ENCODE measurements at regions of chr14 and their contacts with region 1.

Region 1: DNA sequence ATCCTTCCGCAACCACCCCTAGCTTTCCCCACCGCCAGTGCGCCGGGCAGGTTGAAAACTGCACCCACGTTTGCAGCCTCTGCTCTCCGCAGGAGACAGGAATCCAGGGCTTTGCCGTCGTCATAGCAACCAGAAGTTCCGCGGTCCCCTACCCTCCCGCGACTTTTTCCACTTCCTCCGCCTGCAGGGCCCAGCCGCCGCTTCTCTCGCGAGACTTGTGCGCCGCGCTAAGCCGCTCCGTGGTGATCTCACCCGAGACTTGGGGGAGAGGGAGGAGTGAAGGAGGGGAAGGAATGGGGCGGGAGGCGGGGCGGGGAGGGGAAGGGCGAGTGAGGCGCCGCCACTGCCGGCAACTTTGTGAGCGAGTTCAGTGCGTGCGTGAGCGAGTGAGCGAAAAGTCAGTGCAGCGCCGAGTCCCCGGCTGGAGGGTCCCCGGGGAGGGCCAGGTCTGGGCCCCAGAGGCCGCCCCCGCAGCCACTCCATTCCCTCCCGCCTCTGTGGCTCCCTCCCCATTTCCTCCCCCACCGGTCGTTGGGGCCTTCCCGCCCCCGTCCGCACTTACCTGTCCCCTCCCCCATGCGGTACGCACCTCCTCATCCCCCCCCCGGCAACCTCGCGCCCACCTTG is 413.0 kb downstream of the PCNX1 start:
- DNase-seq: peak; percentile 96 to 100 (median 98)
- ATAC-seq: peak; percentile 85
- H3K4me3 ChIP-seq: peak within 1 kb of the TSS; percentile 85
- H3K4me3 Mint-ChIP-seq: peak within 1 kb of the TSS; percentile 94
- H3K27ac ChIP-seq: peak within 1 kb of the TSS; percentile 85 to 97
- H3K27ac Mint-ChIP-seq: peak within 1 kb of the TSS; percentile 89
- H3K4me1 ChIP-seq: peaks cover 20% of the 10 kb centered on the region
- H3K4me1 Mint-ChIP-seq: peaks cover 47% of the 10 kb centered on the region
- H3K27me3 ChIP-seq: no peaks in the 10 kb centered on the region
- H3K27me3 Mint-ChIP-seq: no peaks in the 10 kb centered on the region
- CTCF ChIP-seq: no peak

Region 2: GRCh38 chr14:70359181-70360090 is 960.8 kb before region 1 on chr14 and contains the start of gene COX16:
- CTCF ChIA-PET with region 1: no interaction called
- POLR2A ChIA-PET with region 1: no interaction called
- intact Hi-C with region 1: loop called in 1 of 2 experiments (anchors 5 kb)
- DNase-seq: peak; percentile 63 to 92 (median 74)
- ATAC-seq: peak; percentile 95
- H3K4me3 ChIP-seq: peak within 1 kb of the TSS; percentile 74
- H3K4me3 Mint-ChIP-seq: peak within 1 kb of the TSS; percentile 97
- H3K27ac ChIP-seq: peak within 1 kb of the TSS; percentile 32 to 53
- H3K27ac Mint-ChIP-seq: peak within 1 kb of the TSS; percentile 91
- H3K4me1 ChIP-seq: peaks cover 21% of the 10 kb centered on the region
- H3K4me1 Mint-ChIP-seq: peaks cover 53% of the 10 kb centered on the region
- H3K27me3 ChIP-seq: no peaks in the 10 kb centered on the region
- H3K27me3 Mint-ChIP-seq: no peaks in the 10 kb centered on the region
- CTCF ChIP-seq: no peak
- total RNA-seq, gene COX16: 11.7 to 13.3 TPM

Region 3: DNA sequence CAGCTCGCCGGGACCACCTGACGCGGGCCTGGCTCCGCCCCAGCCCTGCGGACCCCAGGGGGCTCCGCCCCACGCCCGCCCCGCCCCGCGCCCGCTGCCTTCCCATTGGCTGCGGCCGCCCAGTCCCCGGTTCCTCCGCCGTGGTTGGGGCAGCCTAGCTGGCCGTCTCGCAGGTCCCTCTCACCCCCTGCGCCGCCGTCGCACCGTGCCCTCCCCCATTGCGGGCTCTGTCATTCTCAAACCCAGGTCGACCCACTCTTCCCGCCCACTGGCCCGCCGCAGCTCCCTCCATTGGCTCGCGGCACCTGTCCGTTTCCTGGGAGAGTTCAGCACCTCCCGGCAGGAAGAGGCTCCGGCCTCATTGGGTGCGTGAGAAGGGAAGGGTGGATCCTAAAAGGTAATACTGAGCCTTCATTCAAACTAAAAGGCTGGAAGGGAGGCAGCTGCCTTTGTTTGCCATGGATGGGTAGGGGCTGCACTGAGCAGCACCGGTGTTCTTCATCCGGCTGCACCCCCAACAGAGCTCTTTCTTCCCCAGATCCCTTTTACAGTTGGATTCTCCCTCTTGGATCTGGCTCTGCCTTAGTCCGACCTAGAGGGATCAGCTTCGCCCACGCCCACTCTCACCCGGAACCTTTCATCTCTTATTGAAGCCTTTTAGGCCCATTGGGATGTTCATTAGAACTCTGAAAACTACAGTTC is 510.5 kb before region 1 on chr14:
- CTCF ChIA-PET with region 1: no interaction called
- POLR2A ChIA-PET with region 1: interaction called, 3 read pairs
- intact Hi-C with region 1: loop called in 1 of 2 experiments (anchors 5 kb)
- DNase-seq: peak; percentile 69 to 94 (median 84)
- ATAC-seq: peak; percentile 74
- H3K4me3 ChIP-seq: peak overlapping the region; percentile 74
- H3K4me3 Mint-ChIP-seq: no peak overlapping the region
- H3K27ac ChIP-seq: peak overlapping the region in 1 of 2 donors; percentile 31
- H3K27ac Mint-ChIP-seq: no peak overlapping the region
- H3K4me1 ChIP-seq: peaks cover 15% of the 10 kb centered on the region
- H3K4me1 Mint-ChIP-seq: peaks cover 10% of the 10 kb centered on the region
- H3K27me3 ChIP-seq: no peaks in the 10 kb centered on the region
- H3K27me3 Mint-ChIP-seq: no peaks in the 10 kb centered on the region
- CTCF ChIP-seq: no peak

Region 4: GRCh38 chr14:71403656-71404055 is 83.4 kb after region 1 on chr14:
- CTCF ChIA-PET with region 1: interaction called, 5 read pairs
- POLR2A ChIA-PET with region 1: interaction called, 16 read pairs
- intact Hi-C with region 1: loop called (anchors 1 to 5 kb)
- DNase-seq: peak in 6 of 14 experiments; percentile 7 to 62 (median 29)
- ATAC-seq: peak; percentile 48
- H3K4me3 ChIP-seq: no peak overlapping the region
- H3K4me3 Mint-ChIP-seq: no peak overlapping the region
- H3K27ac ChIP-seq: no peak overlapping the region
- H3K27ac Mint-ChIP-seq: peak overlapping the region; percentile 73
- H3K4me1 ChIP-seq: peaks cover 9% of the 10 kb centered on the region
- H3K4me1 Mint-ChIP-seq: peaks cover 27% of the 10 kb centered on the region
- H3K27me3 ChIP-seq: no peaks in the 10 kb centered on the region
- H3K27me3 Mint-ChIP-seq: no peaks in the 10 kb centered on the region
- CTCF ChIP-seq: no peak

Region 5: GRCh38 chr14:71753126-71753830 is 433.1 kb after region 1 on chr14:
- CTCF ChIA-PET with region 1: interaction called, 3 read pairs
- POLR2A ChIA-PET with region 1: interaction called, 4 read pairs
- intact Hi-C with region 1: loop called (anchors 1 to 2 kb)
- DNase-seq: peak; percentile 47 to 81 (median 62)
- ATAC-seq: no peak
- H3K4me3 ChIP-seq: no peak overlapping the region
- H3K4me3 Mint-ChIP-seq: no peak overlapping the region
- H3K27ac ChIP-seq: no peak overlapping the region
- H3K27ac Mint-ChIP-seq: no peak overlapping the region
- H3K4me1 ChIP-seq: peaks cover 6% of the 10 kb centered on the region
- H3K4me1 Mint-ChIP-seq: no peaks in the 10 kb centered on the region
- H3K27me3 ChIP-seq: no peaks in the 10 kb centered on the region
- H3K27me3 Mint-ChIP-seq: peaks cover 6% of the 10 kb centered on the region
- CTCF ChIP-seq: peak; percentile 92